ENCODE measurements at regions of chr3 and their contacts with region 1.

Region 1: DNA sequence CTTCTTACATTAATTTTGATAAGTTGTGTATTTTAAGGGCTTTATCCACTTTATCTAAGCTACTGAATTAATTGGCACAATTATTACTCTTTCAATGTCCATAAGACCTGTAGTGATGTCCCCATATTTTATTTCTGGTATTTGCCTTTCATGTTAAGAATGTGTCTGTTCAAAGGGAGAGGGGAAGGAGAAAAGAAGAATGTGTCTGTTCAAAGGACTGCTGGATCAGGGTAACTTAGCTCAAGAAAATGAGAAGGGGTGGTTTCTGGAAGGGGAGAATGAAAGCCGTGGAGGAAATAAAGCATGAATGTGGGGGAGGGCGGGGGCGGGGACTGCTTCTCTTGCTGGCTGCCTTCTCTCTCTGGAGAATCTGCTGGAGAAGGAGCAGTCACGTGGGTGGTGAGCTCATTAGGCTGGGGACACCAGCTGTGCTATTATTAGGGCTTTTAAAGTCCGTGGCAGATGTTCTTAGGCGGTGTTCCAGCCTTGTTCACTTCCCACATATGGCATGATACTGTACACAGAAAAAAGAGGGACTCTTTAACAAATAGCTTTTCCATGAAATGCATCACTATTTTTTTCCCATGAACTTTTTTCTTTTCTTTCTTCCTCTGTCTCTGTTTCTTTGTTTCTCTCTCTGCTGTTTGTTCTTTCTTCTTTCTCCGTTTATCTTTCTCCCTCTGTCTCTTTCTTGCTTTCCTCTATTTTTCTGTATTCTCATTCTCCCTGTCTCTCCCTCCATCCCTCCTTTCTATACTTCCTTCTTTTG is 63.7 kb upstream of the ULK4 start:
- DNase-seq: peak in 1 of 2 experiments; percentile 63
- H3K4me3 ChIP-seq: peak overlapping the region in 3 of 4 experiments; percentile 27 to 49 (median 29); a peak in 5 of 8 replicates
- H3K27ac ChIP-seq: peak overlapping the region; percentile 72; the same call in 1 of the 2 replicates
- H3K4me1 ChIP-seq: peaks cover 0 to 18% (median 14%) of the 10 kb centered on the region in 4 experiments; a peak in 4 of 7 replicates
- H3K27me3 ChIP-seq: no peaks in the 10 kb centered on the region
- CTCF ChIP-seq: no peak
- EP300 ChIP-seq: no peak; a peak in 1 of 3 replicates
- POLR2A ChIP-seq: peak; percentile 39 to 63
- RAD21 ChIP-seq: no peak; a peak in 2 of 4 replicates

Region 2: GRCh38 chr3:42012935-42013690 is 12.4 kb before region 1 on chr3:
- CTCF ChIA-PET with region 1: interaction called, 19 read pairs
- POLR2A ChIA-PET with region 1: interaction called, 8 read pairs
- DNase-seq: peak in 1 of 2 experiments; percentile 72
- H3K4me3 ChIP-seq: peak overlapping the region; percentile 75 to 95 (median 80)
- H3K27ac ChIP-seq: no peak overlapping the region
- H3K4me1 ChIP-seq: peaks cover 5 to 7% (median 6%) of the 10 kb centered on the region in 4 experiments; a peak in 6 of 7 replicates
- H3K27me3 ChIP-seq: peaks cover 0 to 7% (median 4%) of the 10 kb centered on the region in 4 experiments; a peak in 4 of 7 replicates
- CTCF ChIP-seq: no peak; a peak in 1 of 4 replicates
- EP300 ChIP-seq: no peak
- POLR2A ChIP-seq: peak in 1 of 2 experiments; percentile 23; a peak in 1 of 3 replicates
- RAD21 ChIP-seq: no peak

Region 3: DNA sequence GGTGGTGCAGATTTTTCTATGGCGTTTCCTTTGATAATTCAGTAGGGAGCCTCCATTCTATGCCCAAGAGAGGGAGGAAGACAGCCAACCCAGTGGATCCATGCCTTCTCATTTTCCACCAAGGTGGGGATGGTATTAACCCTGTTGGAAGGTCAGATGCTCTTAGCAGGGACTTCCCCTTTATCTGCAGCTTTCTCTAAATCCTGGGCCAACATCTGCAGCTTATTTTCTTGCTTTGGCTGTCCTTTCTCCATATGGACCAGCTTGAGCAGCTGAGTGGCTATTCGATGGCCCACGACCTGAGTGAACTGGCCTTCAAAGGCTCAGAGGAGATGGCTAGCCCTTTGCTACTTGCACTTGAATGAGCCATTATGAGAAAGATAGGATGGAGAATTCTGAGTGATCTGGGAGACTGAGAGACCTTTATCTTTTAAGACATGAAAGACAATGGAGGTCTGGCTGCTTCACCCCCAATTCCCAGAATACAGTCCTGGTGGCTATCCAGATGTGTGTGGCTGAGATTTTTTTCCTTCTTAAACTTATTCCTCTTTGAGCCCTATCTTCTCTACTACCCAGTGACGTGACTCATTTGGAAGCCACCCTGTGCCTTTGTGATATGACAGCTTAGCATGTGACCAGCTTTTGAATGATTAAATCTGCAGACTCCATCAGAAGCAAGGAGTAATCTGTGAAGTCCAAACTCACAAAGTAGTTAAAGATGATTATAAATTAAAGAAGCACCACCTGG is 26.0 kb after region 1 on chr3:
- CTCF ChIA-PET with region 1: interaction called, 16 read pairs
- POLR2A ChIA-PET with region 1: interaction called, 3 read pairs
- DNase-seq: no peak
- H3K4me3 ChIP-seq: no peak overlapping the region
- H3K27ac ChIP-seq: no peak overlapping the region
- H3K4me1 ChIP-seq: peaks cover 6 to 24% (median 18%) of the 10 kb centered on the region in 4 experiments
- H3K27me3 ChIP-seq: no peaks in the 10 kb centered on the region
- CTCF ChIP-seq: no peak
- EP300 ChIP-seq: no peak
- POLR2A ChIP-seq: no peak
- RAD21 ChIP-seq: no peak

Measured in H1 (cell line).